ENCODE measurements at regions of chr1 and their contacts with region 1.

Region 1: GRCh38 chr1:26035959-26036755 is 9.8 kb downstream of the SLC30A2 start:
- DNase-seq: peak; percentile 93

Region 2: DNA sequence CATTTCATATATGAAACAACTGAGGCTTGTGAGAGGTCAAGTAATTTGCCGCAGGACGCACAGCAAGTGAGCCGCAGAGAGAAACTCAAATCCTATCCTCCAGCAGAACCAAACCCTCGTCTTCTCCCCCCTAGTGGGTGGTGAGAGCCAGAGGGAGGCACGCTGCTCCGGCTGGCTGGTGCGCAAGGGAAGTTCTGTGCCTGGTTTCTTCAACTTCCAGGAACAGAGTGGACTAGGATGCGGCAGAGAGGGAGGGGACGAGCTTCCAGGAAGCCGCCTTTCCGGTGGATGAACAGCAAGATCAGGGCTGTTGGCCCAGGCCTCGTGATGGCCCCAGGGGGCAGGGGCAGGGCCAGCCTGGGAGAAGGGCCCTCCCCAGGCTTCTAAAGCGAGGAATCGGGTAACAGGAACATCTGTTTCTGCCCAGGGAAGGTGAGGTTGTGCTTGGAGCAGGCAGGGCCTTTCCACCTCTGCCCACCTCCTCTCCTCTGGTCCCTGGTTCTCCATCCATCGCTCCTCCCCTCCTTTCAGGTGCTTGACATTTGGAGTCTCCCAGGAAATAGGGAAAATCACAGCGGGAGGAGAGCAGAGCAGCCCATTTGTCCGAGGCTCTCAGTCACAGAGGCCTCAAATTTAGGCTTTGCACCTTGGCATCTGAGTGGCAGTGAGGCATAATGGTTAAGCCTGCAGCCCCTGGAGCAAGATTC is 58.7 kb after region 1 on chr1:
- intact Hi-C with region 1: loop called (anchors 2 kb)
- DNase-seq: no peak

Region 3: DNA sequence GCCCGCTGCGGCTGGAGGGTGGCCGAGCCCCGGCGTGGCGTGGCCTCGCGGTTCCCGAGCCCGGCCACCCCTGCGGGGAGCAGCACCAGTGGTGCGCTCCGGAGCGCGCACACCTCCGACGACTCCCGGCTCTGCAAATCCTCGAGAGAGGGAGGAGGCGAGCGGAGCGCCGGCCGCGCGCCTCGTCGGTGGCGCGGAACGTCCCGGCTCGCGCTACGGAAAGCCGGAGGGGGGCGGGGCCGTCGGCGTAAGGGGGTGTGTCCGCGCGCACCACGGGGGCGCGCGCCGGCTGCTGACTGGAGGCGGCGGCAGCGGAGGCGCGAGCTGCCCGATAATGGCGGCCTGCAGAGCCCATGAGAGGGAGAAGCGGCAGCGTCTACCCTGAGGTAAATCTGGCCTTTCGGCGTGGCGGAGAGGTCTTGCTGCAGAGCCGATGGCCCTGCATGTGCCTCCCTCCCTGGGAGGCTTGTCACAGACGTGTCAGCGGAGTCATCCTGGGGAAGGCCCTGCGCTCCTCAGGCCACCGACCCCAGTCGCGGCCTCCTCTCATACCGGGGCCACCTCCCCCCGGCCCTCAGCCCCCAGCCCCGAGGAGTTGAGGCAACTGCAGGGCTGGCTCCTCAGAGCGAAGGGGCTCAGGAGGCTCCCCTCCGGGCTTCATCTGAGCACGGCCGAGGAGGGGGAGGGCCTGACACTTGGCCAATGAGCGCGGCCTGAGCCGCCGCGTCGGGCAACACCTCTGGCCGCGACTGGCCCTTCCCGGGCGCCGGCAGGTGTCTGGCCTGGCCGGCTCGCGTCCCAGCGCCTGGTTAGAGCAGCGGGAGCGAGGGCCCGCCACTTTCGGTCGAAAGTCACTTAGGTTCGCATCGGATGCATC is 75.6 kb after region 1 on chr1 and contains the start of gene PDIK1L:
- intact Hi-C with region 1: loop called (anchors 5 kb)
- DNase-seq: peak; percentile 97
- total RNA-seq, gene PDIK1L: 3.5 TPM

Region 4: DNA sequence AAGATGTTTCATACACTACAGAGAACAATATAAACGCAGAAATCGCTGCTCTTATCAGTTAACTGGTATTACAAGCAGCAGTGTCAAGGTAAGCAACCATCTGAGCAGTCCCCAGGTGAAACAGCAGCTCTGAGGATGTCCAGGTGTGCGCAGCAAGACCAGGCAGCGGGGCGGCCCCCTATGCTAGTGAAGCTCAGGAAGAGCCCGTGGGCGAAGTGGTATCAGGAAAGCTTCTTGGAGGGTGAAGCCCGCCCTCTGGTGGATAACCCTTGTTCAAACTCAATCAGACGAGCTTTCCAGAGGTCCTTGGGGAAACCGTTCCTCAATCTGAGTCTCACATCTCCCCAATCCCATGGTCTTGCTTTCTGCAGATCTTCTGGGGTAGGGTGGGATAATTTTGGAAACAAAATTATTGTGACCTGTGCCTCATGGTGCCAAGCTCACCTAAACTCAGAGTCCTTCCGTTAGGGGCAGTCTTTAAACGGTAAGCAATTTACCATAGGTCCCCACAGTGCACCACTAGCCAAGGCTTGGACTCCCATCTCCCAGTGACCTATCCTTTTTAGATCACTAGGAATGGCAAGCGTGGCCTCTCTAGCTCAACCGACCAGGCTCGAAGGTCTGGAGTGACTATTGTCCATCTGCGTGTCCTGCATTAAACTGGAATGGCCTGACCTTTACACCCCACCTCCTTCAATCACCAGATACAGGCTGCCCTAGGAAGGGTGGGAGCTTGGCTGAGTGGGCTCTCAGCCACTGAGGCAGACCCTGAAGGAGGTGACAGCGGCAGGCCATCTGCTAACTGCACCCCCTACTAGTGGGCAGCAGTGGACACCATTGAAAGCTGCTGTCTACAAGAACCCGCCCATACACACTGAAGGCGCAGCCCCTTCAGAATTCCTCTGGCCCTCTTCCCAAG is 109.1 kb after region 1 on chr1:
- intact Hi-C with region 1: loop called (anchors 5 kb)
- DNase-seq: peak; percentile 90

Region 5: GRCh38 chr1:26233903-26234643 is 197.9 kb after region 1 on chr1 and contains the start of gene CEP85:
- intact Hi-C with region 1: loop called (anchors 10 kb)
- DNase-seq: peak; percentile 100
- total RNA-seq, gene CEP85: 25.8 TPM

Region 6: GRCh38 chr1:26279456-26280332 is 243.5 kb after region 1 on chr1 and contains the start of gene SH3BGRL3:
- intact Hi-C with region 1: no loop called
- DNase-seq: peak; percentile 96
- total RNA-seq, gene SH3BGRL3: 55.0 TPM

Region 7: DNA sequence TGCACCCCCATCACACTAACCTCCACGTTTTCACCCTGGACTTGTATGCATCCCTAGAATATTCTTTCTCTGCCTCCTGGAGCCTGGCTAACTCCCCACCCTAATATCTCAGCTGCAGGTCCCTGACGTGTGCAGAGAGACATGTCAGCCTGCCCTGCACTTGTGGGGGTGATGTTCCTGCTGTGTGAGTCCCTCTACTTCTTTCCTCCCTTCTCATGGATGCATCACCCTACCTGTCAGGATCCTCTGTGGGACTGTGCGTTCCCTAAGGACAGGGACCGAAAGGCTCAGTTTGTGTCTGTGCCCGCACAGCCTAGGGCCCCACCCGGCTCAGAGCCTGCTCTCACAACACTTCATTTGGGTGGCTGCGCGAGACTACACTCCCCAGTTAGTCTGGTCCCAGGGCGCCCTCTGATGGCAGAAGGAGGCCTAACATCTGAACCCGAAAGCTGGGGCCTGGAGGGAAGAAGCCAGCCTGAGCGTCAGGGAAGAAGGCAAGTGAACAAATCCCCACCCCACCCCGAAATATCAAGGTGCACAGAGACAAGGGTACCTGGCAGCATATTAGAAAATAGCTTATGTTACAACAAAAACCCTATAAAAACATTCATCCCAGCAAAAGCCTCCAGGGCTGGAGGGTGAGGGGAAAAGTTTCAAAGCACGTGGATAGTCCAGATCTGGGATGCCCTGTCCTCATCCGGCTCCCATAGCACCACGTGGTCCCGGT is 285.3 kb after region 1 on chr1:
- intact Hi-C with region 1: loop called (anchors 10 kb)
- DNase-seq: peak; percentile 96

Region 8: DNA sequence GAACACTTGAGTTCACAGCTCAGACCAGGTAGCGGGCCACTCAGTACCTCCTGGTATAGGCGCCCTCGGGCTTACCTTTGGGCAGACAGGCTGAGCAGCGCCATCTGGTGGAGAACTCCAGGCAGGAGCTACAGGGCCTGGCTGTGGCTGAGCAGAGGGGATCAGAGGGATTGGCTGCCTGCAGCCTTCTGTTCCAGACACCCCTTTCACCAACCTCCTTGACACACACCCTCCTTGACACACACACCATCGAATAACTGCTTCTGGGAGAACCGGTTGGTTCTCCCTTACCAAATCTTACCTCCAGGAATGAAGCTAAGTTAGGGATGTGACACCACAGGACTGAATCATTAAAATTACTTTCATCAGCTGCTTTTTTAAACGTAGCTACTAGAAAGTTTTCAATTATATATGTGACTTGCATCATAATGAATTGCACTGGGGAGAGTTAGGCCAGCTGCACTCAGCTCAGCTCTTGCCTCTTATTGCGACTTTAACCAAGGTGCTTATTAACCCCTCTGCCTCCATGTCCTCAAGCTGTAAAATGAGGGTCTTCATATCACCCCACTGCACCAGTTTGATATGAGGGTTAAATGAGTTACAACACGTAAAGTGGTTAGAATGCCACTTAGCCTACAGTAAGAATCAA is 381.1 kb after region 1 on chr1:
- intact Hi-C with region 1: loop called (anchors 10 kb)
- DNase-seq: peak; percentile 89